Activated CD4-positive, alpha-beta T cell treated with anti-CD3 and anti-CD28 coated beads, Interleukin-2, amount 10 ng/mL, durations not matched to agents 24 days and 14 days (primary cell): ENCODE measurements at regions of chr20 and their contacts with region 1.

Region 1: GRCh38 chr20:20664795-20665589 is 47.5 kb downstream of the RALGAPA2 start:
- DNase-seq: peak; percentile 69
- H3K4me3 Mint-ChIP-seq: no peak overlapping the region
- H3K27ac Mint-ChIP-seq: no peak overlapping the region
- H3K4me1 Mint-ChIP-seq: peaks cover 10% of the 10 kb centered on the region
- H3K27me3 Mint-ChIP-seq: no peaks in the 10 kb centered on the region

Region 2: DNA sequence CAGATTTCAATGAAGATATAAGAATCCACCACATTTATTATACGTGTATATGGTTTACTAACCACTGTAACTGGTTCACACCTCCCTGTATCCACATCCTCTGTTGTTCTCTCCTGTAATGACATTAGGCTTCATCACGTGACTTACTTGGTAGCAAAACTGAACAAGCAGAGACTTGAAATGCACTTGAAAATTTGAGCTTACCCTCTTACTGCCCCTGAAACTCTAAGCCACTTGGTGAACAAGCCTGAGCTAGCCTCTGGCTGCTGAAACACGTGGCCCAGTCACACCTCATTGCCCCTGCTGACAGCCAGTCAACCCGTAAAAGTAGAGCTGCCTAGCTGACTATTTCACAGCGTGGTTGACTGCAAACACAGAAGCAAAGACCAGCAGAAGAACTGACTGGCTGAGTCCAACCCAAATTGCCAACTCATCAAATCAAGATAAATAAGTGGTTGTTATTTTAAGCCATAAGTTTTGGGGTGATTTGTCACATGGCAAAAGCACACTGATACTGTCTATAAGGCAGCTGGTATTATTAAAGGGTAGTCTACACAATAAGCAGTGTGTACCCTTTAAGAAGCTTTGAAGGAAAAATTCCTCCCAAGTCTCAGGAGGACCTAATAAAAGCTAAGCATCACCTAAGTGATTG is 61.5 kb before region 1 on chr20:
- intact Hi-C with region 1: no loop called
- DNase-seq: peak; percentile 53
- H3K4me3 Mint-ChIP-seq: no peak overlapping the region
- H3K27ac Mint-ChIP-seq: no peak overlapping the region
- H3K4me1 Mint-ChIP-seq: peaks cover 2% of the 10 kb centered on the region
- H3K27me3 Mint-ChIP-seq: no peaks in the 10 kb centered on the region

Region 3: GRCh38 chr20:20628314-20628713 is 36.7 kb before region 1 on chr20:
- intact Hi-C with region 1: no loop called
- DNase-seq: peak; percentile 34
- H3K4me3 Mint-ChIP-seq: no peak overlapping the region
- H3K27ac Mint-ChIP-seq: no peak overlapping the region
- H3K4me1 Mint-ChIP-seq: no peaks in the 10 kb centered on the region
- H3K27me3 Mint-ChIP-seq: no peaks in the 10 kb centered on the region

Region 4: GRCh38 chr20:20824924-20825584 is 160.1 kb after region 1 on chr20:
- intact Hi-C with region 1: loop called (anchors 1 kb)
- DNase-seq: peak; percentile 86
- H3K4me3 Mint-ChIP-seq: no peak overlapping the region
- H3K27ac Mint-ChIP-seq: no peak overlapping the region
- H3K4me1 Mint-ChIP-seq: peaks cover 2% of the 10 kb centered on the region
- H3K27me3 Mint-ChIP-seq: peaks cover 16% of the 10 kb centered on the region